SK-N-SH (cell line): ENCODE measurements at regions of chr1 and their contacts with region 1.

Region 1: DNA sequence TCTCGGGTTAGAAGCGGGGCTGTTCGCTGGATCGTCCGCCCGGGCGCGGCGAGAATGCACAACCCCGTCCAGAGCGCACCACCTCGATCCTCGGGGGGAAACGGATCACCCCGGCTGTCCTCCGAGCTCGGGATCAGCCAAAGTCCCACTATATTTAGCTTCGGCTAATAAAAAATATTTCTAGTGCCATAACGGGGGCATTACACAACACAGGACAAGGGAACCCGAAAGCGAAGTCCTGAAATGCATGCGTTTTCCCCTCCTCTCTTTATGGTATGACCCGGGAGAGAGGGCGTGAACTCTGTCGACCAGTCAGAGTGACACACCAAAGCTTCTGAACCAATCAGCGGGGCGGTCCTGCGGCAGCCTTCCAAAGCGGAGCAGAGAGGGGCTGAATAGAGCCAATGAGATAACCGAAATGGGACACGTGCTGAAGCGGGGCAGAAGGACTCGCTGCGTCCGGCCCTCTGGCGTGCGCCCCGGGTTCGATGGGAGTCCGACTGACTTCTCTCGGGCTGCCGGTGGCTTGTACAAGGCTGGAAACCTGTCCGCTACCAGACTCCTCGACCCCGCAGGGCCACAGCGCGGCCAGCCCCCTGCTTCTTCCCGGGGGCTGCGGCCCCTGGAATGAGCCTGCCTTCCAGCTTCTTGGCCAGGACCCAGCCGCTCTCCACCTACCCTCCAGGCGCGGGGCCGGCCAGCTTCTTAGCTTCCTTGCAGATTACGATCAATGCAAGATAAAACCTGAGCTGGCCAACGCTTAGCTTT is at the start of gene ALDH4A1:
- DNase-seq: peak; percentile 98
- H3K4me3 ChIP-seq: peak within 1 kb of the TSS; percentile 93 to 94
- H3K27ac ChIP-seq: peak within 1 kb of the TSS; percentile 76 to 93
- H3K4me1 ChIP-seq: peaks cover 9 to 16% of the 10 kb centered on the region in 2 experiments; a peak in 2 of 4 replicates
- H3K27me3 ChIP-seq: no peaks in the 10 kb centered on the region
- CTCF ChIP-seq: no peak
- EP300 ChIP-seq: 0 out of 4 replicates have a peak, but pooled peaks of 1 of the 2 experiments have one; percentile 36
- RAD21 ChIP-seq: no peak
- polyA plus RNA-seq, gene ALDH4A1: 18.5 and 26.2 TPM in 2 replicates

Region 2: DNA sequence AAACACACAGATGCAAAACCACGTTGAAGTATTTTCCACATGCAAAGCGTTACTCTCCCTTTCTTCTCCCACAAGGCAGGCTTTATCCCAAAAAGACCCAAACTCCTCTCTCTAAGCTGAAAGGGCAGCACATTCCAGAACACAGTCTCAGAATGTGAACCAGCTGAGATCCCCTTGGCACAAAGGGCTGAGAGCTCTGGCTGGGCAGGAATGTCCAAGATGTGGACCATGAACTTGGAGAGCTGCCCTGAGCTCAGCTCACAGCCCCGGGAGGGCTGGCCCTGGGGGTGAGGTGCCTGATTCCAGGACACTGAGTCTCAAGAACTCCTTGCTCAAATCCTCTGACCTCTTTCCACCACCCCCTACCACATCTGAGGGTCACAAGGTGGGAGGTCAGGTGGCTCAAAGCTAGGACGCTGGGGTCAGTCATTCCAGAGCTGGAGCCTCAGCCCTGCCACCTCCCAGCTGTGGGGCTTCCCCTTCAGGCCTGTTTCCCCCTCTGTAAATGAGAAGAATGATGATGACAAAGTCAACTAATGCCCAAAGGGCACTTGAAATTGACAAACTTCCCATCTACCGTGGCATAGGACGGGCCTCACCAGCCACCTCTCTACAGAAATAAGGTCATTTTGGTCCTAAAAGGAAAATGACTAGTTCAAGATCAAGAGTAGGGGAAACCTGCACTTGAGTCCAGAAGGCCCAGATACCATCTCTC is 11.8 kb before region 1 on chr1:
- CTCF ChIA-PET with region 1: interaction called, 134 read pairs
- POLR2A ChIA-PET with region 1: interaction called, 8 read pairs
- DNase-seq: no peak
- H3K4me3 ChIP-seq: no peak overlapping the region
- H3K27ac ChIP-seq: no peak overlapping the region
- H3K4me1 ChIP-seq: peaks cover 4 to 11% of the 10 kb centered on the region in 2 experiments; a peak in 2 of 4 replicates
- H3K27me3 ChIP-seq: no peaks in the 10 kb centered on the region
- CTCF ChIP-seq: no peak
- EP300 ChIP-seq: no peak
- RAD21 ChIP-seq: no peak

Region 3: DNA sequence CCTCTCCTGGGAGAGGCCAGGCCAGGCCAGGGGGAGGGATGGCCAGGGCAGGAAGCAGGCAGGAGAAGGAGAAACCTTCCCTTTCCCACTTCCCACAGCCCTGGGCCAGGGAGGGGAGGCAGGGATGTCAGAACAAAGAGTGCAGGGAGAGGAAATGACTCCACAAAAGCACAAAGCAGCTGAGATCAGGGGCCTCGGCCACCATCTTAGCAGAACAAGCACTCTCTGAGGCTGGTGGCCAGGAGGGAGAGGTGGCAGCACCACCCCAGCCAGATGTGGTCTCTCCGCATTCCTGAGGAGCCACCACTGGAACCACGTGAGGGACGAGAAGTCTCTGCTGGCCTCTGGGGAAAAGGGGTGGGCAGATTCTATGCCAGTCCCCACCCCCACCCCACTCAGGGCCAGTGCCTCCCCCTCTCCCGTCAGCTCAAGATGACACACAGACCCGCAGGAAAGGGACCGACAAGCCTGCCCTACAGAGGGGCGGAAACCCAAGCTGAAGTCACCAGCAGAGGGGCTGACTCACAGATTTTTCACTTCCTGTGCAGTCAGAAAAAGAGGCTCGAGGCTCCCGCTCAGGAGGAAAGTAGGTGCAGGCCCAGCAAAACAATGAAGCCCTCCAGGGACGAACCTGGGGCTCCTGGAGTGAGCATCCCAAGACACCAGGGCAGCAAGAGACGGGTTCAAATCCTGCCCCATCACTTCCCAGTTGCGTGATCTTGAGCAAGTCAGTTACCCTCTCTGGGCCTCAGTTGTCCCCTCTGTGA is 23.8 kb after region 1 on chr1:
- CTCF ChIA-PET with region 1: interaction called, 16 read pairs
- POLR2A ChIA-PET with region 1: interaction called, 4 read pairs
- DNase-seq: no peak
- H3K4me3 ChIP-seq: 0 out of 4 replicates have a peak overlapping the region, but pooled peaks of 1 of the 2 experiments have one; percentile 22
- H3K27ac ChIP-seq: peak overlapping the region in 1 of 2 experiments; percentile 94; a peak in 2 of 4 replicates
- H3K4me1 ChIP-seq: peaks cover 46 to 50% of the 10 kb centered on the region in 2 experiments; a peak in 3 of 4 replicates
- H3K27me3 ChIP-seq: no peaks in the 10 kb centered on the region
- CTCF ChIP-seq: no peak
- EP300 ChIP-seq: peak in 1 of 2 experiments; percentile 75; a peak in 1 of 4 replicates
- RAD21 ChIP-seq: no peak

Region 4: DNA sequence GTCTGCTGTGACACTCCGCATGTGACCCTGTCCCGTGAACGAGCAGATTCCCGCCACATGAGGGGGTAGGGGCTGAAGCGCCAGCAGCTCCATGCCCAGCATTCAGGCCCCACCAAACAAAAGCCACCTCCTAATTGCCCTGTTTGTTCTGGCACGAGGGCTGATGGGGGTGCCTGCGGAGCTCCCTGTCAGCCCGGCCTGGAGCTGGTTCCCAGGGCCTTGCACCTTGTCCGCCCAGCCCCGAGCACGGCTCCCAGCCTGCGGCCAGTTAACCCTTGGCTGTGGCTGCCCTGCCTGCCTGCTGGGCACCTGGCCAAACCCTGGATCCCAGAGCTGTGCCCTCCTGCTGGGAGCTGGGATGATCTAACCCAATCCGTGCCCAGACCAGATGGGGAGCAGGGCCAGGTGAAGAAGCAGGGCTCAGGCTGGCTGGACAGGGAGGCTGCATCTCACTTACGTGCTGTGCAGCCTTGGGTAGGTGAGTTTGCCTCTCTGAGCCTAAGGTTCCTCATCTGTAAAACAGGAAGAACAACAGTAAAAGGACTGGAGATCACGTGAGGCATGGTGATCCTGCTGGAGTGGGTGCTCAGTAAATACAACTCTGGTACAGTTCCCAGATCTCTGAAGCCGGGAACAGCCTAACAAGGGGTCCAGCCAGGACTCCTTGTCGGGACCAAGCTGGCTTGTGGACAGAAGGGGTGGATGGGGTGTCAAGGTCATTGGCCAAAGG is 164.6 kb after region 1 on chr1:
- CTCF ChIA-PET with region 1: interaction called, 34 read pairs
- POLR2A ChIA-PET with region 1: interaction called, 3 read pairs
- DNase-seq: peak; percentile 63
- H3K4me3 ChIP-seq: no peak overlapping the region
- H3K27ac ChIP-seq: no peak overlapping the region; a peak in 1 of 4 replicates
- H3K4me1 ChIP-seq: peaks cover 0 to 41% of the 10 kb centered on the region in 2 experiments; a peak in 1 of 4 replicates
- H3K27me3 ChIP-seq: no peaks in the 10 kb centered on the region
- CTCF ChIP-seq: no peak
- EP300 ChIP-seq: no peak
- RAD21 ChIP-seq: no peak

Region 5: GRCh38 chr1:19101244-19101643 is 198.5 kb after region 1 on chr1:
- CTCF ChIA-PET with region 1: interaction called, 149 read pairs
- POLR2A ChIA-PET with region 1: no interaction called
- DNase-seq: no peak
- H3K4me3 ChIP-seq: no peak overlapping the region
- H3K27ac ChIP-seq: no peak overlapping the region
- H3K4me1 ChIP-seq: no peaks in the 10 kb centered on the region
- H3K27me3 ChIP-seq: no peaks in the 10 kb centered on the region
- CTCF ChIP-seq: no peak
- EP300 ChIP-seq: no peak
- RAD21 ChIP-seq: no peak

Region 6: DNA sequence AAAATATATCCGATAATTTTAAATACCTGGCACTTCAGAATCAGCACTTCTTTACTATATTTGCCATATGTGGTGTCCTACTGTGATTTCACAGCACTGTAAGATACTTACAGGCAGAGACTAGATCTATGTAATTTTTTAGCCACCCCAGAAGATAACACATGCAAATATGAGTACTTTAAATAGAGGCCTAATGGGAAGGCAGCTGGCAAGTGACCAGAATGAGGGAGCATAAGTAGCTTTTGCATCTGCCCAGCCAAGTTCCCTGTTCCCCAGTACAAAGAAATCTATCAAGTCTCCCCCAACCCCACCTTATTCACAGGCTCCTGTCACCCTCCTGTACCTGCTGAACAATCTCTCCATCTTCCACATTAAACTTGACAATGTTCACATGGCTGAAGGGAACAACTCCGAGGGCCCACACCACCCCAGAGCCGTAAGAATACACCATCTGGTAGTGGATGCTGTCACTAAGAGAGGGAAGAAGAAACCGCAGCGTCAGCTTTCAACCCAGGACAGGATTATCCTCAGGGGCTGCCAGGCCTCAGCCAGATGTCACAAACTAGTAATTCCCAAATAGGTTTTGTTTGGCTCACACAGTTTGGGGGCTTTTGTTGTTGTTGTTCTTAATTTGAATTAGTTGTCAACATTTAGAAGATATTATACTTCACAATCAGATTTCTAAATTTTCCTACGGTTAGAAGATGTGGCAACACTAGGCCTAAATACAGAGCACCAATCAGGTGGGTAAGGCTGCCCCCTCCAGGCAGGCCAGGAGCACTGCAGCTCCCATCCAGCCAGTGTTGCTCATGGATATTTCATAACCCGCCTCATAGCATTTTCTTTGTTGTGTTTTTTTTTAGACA is 338.2 kb after region 1 on chr1:
- CTCF ChIA-PET with region 1: interaction called, 10 read pairs
- POLR2A ChIA-PET with region 1: no interaction called
- DNase-seq: peak; percentile 82
- H3K4me3 ChIP-seq: no peak overlapping the region; a peak in 1 of 4 replicates
- H3K27ac ChIP-seq: no peak overlapping the region
- H3K4me1 ChIP-seq: no peaks in the 10 kb centered on the region
- H3K27me3 ChIP-seq: no peaks in the 10 kb centered on the region
- CTCF ChIP-seq: peak; percentile 98
- EP300 ChIP-seq: no peak
- RAD21 ChIP-seq: peak; percentile 79